ENCODE measurements at regions of chr11 and their contacts with region 1.

Region 1: GRCh38 chr11:46308631-46309419 is 31.4 kb downstream of the CREB3L1 start:
- DNase-seq: peak; percentile 63 to 72 (median 65)
- H3K4me3 ChIP-seq: peak overlapping the region in 1 of 7 experiments; percentile 23
- H3K27ac ChIP-seq: no peak overlapping the region
- H3K4me1 ChIP-seq: peaks cover 7 to 21% (median 17%) of the 10 kb centered on the region in 4 experiments
- H3K27me3 ChIP-seq: no peaks in the 10 kb centered on the region

Region 2: DNA sequence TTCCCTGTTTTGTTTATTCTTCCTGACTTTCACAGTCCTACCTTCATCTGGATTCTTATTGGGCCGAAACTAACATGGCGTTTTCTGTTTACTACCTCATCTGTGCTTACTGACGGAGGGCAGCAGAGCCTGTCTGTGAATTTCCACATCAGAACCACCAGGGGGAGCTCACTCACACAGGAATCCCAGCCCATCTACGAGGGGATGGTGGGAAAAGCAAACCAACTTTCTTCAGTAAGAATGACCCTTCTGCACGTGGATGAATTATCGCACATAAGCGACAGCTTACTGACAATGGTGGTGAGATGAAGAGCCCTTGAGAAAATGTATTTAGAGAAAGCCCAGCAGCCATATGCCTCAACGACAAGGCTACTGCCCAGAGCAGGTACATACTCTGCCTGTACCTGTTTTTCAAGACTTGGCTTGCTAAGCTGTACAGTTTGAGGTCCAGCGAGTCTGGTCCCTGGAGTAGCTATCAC is 343.9 kb before region 1 on chr11:
- CTCF ChIA-PET with region 1: interaction called, 14 read pairs
- POLR2A ChIA-PET with region 1: no interaction called
- DNase-seq: peak; percentile 76 to 86 (median 80)
- H3K4me3 ChIP-seq: no peak overlapping the region
- H3K27ac ChIP-seq: no peak overlapping the region
- H3K4me1 ChIP-seq: peaks cover 0 to 6% (median 4%) of the 10 kb centered on the region in 4 experiments
- H3K27me3 ChIP-seq: no peaks in the 10 kb centered on the region

Region 3: GRCh38 chr11:46247664-46248063 is 61.2 kb before region 1 on chr11:
- CTCF ChIA-PET with region 1: interaction called, 240 read pairs
- POLR2A ChIA-PET with region 1: interaction called, 5 read pairs
- DNase-seq: peak in 2 of 3 donors; percentile 46 to 51
- H3K4me3 ChIP-seq: no peak overlapping the region
- H3K27ac ChIP-seq: no peak overlapping the region
- H3K4me1 ChIP-seq: peaks cover 5 to 13% (median 10%) of the 10 kb centered on the region in 4 experiments
- H3K27me3 ChIP-seq: no peaks in the 10 kb centered on the region

Region 4: GRCh38 chr11:46295312-46296058 is 13.3 kb before region 1 on chr11:
- CTCF ChIA-PET with region 1: interaction called, 50 read pairs
- POLR2A ChIA-PET with region 1: no interaction called
- DNase-seq: peak; percentile 51 to 79 (median 77)
- H3K4me3 ChIP-seq: peak overlapping the region; percentile 25 to 77 (median 61)
- H3K27ac ChIP-seq: no peak overlapping the region
- H3K4me1 ChIP-seq: peaks cover 1 to 21% (median 16%) of the 10 kb centered on the region in 4 experiments
- H3K27me3 ChIP-seq: peaks cover 0 to 21% (median 12%) of the 10 kb centered on the region in 5 experiments

Region 5: GRCh38 chr11:46346886-46347636 is 38.2 kb after region 1 on chr11 and contains the start of gene DGKZ:
- CTCF ChIA-PET with region 1: interaction called, 94 read pairs
- POLR2A ChIA-PET with region 1: no interaction called
- DNase-seq: peak; percentile 83 to 91 (median 91)
- H3K4me3 ChIP-seq: peak within 1 kb of the TSS; percentile 67 to 97 (median 84)
- H3K27ac ChIP-seq: peak within 1 kb of the TSS; percentile 54 to 79
- H3K4me1 ChIP-seq: peaks cover 20 to 88% (median 84%) of the 10 kb centered on the region in 4 experiments
- H3K27me3 ChIP-seq: no peaks in the 10 kb centered on the region

Region 6: DNA sequence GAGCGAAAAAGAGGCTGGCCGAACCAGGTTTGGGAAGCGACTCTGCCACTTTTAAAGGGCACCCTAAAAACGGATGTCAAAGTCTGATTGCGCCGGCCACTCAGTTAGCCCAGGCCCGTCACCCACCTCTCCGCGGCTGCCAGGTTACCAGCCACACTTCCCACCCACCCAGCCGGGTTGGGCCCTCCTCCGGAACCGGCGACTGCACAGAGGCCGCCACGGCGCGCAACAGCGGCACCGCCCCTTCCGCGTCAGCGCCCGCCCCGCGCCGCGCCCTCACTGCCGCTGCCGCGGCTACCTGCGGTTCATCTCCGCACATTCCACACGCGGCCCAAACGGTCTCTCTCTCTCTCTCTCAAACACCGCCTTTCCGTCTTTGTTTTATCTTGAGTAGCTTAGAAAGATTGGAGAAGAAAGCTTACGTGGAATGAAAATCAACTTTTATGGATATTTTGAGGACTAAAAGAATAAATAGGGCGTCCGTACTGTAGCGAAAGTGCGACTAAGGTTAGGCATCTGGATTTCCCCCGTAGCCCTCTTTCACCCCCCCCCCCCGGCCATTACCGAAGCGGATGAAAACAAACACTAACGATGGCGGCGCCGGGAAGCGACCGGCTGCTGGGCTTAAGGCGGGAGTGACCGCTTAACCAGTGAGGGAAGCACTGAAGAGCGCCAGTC is 308.3 kb after region 1 on chr11 and contains the starts of genes ATG13 and HARBI1:
- CTCF ChIA-PET with region 1: no interaction called
- POLR2A ChIA-PET with region 1: no interaction called
- DNase-seq: peak; percentile 94 to 97 (median 96)
- H3K4me3 ChIP-seq: peak within 1 kb of the TSS; percentile 93 to 100 (median 98)
- H3K27ac ChIP-seq: peak within 1 kb of the TSS; percentile 100
- H3K4me1 ChIP-seq: peaks cover 10 to 18% (median 14%) of the 10 kb centered on the region in 4 experiments
- H3K27me3 ChIP-seq: no peaks in the 10 kb centered on the region